Activated naive CD4-positive, alpha-beta T cell treated with anti-CD3 and anti-CD28 coated beads, Interleukin-2, amount 10 ng/mL, durations not matched to agents 7 days and 5 days (primary cell): ENCODE measurements at regions of chr5 and their contacts with region 1.

Region 1: DNA sequence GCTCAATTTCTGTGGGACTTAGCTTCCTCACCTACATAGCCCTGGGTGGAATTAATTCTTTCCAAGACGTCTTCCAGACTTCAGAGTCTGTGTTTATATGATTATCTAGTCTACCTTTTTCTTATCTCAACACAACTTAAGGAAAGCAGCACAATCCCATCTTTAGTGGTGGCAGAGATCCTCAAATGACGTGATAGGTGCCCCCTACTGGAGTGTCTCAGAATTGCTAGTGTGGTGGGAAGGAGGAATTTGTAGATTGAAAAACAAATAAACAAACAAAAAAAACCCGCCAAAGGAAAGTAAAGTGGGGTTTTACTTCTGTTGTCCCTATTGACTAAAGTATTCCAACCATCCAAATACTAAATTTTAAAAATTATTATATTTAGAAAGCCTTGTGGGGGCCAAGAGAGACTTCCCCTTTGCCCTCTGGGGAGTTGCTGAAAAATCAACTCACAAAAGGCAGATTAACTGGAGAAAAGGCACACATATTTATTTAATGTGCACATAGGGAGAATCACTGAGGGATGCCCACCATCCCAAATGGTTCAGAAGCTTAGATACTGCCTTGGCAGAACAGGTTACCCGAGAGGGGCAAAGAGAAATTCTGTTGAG is 283.3 kb downstream of the TMEM167A start:
- DNase-seq: peak; percentile 56
- H3K4me3 Mint-ChIP-seq: no peak overlapping the region
- H3K27ac Mint-ChIP-seq: no peak overlapping the region
- H3K4me1 Mint-ChIP-seq: no peaks in the 10 kb centered on the region
- H3K27me3 Mint-ChIP-seq: peaks cover 7% of the 10 kb centered on the region

Region 2: DNA sequence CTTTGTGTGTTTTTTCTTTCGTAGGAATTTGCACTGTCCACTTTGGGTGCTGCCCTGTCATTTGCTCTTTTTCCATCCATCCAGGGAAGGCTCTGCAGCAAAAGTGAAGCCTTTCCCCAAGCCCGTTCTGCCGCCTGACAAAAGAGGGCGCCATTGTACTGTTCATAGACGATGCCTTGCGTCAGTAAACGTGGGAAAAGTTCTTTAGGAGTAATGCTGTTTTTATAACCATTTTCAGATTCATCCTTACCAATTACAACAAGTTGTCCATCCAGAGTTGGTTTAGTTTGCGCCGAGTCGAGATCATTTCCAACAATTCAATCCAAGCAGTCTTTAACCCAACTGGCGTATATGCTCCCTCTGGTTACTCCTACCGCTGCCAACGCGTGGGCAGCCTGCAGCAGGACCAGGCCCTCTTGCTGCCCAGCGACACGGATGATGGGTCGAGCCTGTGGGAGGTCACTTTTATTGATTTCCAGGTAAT is 481.5 kb before region 1 on chr5:
- CTCF ChIA-PET with region 1: interaction called, 10 read pairs
- DNase-seq: peak; percentile 60
- H3K4me3 Mint-ChIP-seq: no peak overlapping the region
- H3K27ac Mint-ChIP-seq: no peak overlapping the region
- H3K4me1 Mint-ChIP-seq: no peaks in the 10 kb centered on the region
- H3K27me3 Mint-ChIP-seq: no peaks in the 10 kb centered on the region

Region 3: GRCh38 chr5:82641331-82642003 is 152.4 kb before region 1 on chr5:
- CTCF ChIA-PET with region 1: interaction called, 13 read pairs
- DNase-seq: no peak
- H3K4me3 Mint-ChIP-seq: no peak overlapping the region
- H3K27ac Mint-ChIP-seq: no peak overlapping the region
- H3K4me1 Mint-ChIP-seq: peaks cover 10% of the 10 kb centered on the region
- H3K27me3 Mint-ChIP-seq: peaks cover 3% of the 10 kb centered on the region